Left cardiac atrium (tissue), 4 donors: ENCODE measurements at regions of chr10 and their contacts with region 1.

Region 1: DNA sequence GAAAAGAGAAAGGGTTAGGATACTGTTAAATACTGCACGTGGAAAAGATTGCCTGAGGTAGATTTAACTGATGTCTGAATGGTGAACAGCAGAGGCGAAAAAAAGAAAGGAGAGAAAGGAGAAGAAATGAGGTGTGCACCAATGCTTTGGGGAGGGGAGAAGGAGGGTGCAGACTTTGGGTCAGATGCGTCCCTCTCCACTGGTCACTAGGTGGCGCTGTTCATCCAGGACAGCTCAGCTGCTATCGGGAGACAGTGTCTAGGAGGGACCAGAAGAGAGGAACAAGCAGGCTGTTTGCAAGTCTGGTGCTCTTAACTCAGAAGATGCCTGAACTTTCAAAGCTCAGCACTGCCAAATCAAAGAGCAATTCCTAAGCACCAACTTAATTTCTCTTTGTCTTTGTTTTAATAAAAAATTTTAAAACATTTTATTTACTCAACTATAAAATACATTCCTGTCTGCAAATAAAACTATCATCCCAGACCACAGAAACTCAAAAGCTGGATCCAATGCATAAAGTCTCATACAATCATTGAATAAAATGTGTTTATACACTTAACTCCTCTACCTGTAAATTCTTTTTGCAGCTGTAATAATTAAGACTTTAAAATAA is 83.9 kb upstream of the PDLIM1 start:
- DNase-seq: peak; percentile 82
- ATAC-seq: peak; percentile 88 to 93

Region 2: GRCh38 chr10:95423164-95424005 is 48.7 kb after region 1 on chr10:
- intact Hi-C with region 1: loop called in 1 of 2 experiments (anchors 5 kb)
- DNase-seq: no peak
- ATAC-seq: peak in 1 of 2 donors; percentile 51

Region 3: GRCh38 chr10:95601116-95601719 is 226.5 kb after region 1 on chr10:
- intact Hi-C with region 1: loop called (anchors 2 to 5 kb)
- DNase-seq: peak; percentile 81
- ATAC-seq: peak; percentile 88 to 92